CD8-positive, alpha-beta T cell (primary cell): ENCODE measurements at regions of chr1 and their contacts with region 1.

Region 1: DNA sequence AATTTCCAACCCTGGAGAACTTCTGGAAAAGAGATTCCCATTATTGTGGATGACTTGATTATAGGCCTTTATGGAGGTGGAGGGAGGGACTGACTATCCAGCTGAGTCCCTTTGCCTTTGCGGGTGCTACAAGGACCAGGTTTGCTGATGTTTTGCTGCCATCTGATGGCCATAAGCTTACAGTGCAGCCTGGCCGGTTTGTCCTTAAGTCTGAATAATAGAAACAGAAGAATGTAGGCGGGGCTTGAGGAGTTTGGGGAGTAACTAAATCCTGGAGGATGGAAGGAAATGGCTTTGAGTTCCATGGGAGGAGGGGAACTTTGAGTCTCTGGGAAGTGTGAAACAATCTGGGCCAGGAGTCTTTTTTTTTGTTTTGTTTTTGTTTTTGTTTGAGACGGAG is 55.7 kb upstream of the CD1D start:
- DNase-seq: peak; percentile 44 to 83 (median 67)
- ATAC-seq: peak; percentile 94
- H3K4me3 ChIP-seq: no peak overlapping the region
- H3K4me3 Mint-ChIP-seq: no peak overlapping the region
- H3K27ac ChIP-seq: no peak overlapping the region
- H3K27ac Mint-ChIP-seq: no peak overlapping the region
- H3K4me1 ChIP-seq: no peaks in the 10 kb centered on the region
- H3K4me1 Mint-ChIP-seq: no peaks in the 10 kb centered on the region
- H3K27me3 ChIP-seq: no peaks in the 10 kb centered on the region
- H3K27me3 Mint-ChIP-seq: peaks cover 33% of the 10 kb centered on the region
- CTCF ChIP-seq: peak; percentile 79

Region 2: GRCh38 chr1:157193702-157194391 is 931.2 kb before region 1 on chr1:
- CTCF ChIA-PET with region 1: no interaction called
- POLR2A ChIA-PET with region 1: no interaction called
- intact Hi-C with region 1: loop called in 1 of 2 experiments (anchors 2 kb)
- DNase-seq: peak in 8 of 9 experiments; percentile 7 to 58 (median 42)
- ATAC-seq: no peak
- H3K4me3 ChIP-seq: no peak overlapping the region
- H3K4me3 Mint-ChIP-seq: no peak overlapping the region
- H3K27ac ChIP-seq: no peak overlapping the region
- H3K27ac Mint-ChIP-seq: no peak overlapping the region
- H3K4me1 ChIP-seq: no peaks in the 10 kb centered on the region
- H3K4me1 Mint-ChIP-seq: peaks cover 6% of the 10 kb centered on the region
- H3K27me3 ChIP-seq: no peaks in the 10 kb centered on the region
- H3K27me3 Mint-ChIP-seq: peaks cover 40% of the 10 kb centered on the region
- CTCF ChIP-seq: peak; percentile 66

Region 3: GRCh38 chr1:157580179-157580827 is 544.7 kb before region 1 on chr1:
- CTCF ChIA-PET with region 1: interaction called, 54 read pairs
- POLR2A ChIA-PET with region 1: no interaction called
- intact Hi-C with region 1: loop called (anchors 1 kb)
- DNase-seq: peak in 6 of 9 experiments; percentile 5 to 73 (median 22)
- ATAC-seq: no peak
- H3K4me3 ChIP-seq: no peak overlapping the region
- H3K4me3 Mint-ChIP-seq: no peak overlapping the region
- H3K27ac ChIP-seq: no peak overlapping the region
- H3K27ac Mint-ChIP-seq: no peak overlapping the region
- H3K4me1 ChIP-seq: no peaks in the 10 kb centered on the region
- H3K4me1 Mint-ChIP-seq: no peaks in the 10 kb centered on the region
- H3K27me3 ChIP-seq: no peaks in the 10 kb centered on the region
- H3K27me3 Mint-ChIP-seq: peaks cover 3% of the 10 kb centered on the region
- CTCF ChIP-seq: peak; percentile 75

Region 4: GRCh38 chr1:157691285-157691920 is 433.6 kb before region 1 on chr1:
- CTCF ChIA-PET with region 1: no interaction called
- POLR2A ChIA-PET with region 1: no interaction called
- intact Hi-C with region 1: no loop called
- DNase-seq: peak in 2 of 9 experiments; percentile 23 to 30
- ATAC-seq: no peak
- H3K4me3 ChIP-seq: no peak overlapping the region
- H3K4me3 Mint-ChIP-seq: no peak overlapping the region
- H3K27ac ChIP-seq: no peak overlapping the region
- H3K27ac Mint-ChIP-seq: no peak overlapping the region
- H3K4me1 ChIP-seq: no peaks in the 10 kb centered on the region
- H3K4me1 Mint-ChIP-seq: peaks cover 32% of the 10 kb centered on the region
- H3K27me3 ChIP-seq: no peaks in the 10 kb centered on the region
- H3K27me3 Mint-ChIP-seq: peaks cover 2% of the 10 kb centered on the region
- CTCF ChIP-seq: no peak

Region 5: DNA sequence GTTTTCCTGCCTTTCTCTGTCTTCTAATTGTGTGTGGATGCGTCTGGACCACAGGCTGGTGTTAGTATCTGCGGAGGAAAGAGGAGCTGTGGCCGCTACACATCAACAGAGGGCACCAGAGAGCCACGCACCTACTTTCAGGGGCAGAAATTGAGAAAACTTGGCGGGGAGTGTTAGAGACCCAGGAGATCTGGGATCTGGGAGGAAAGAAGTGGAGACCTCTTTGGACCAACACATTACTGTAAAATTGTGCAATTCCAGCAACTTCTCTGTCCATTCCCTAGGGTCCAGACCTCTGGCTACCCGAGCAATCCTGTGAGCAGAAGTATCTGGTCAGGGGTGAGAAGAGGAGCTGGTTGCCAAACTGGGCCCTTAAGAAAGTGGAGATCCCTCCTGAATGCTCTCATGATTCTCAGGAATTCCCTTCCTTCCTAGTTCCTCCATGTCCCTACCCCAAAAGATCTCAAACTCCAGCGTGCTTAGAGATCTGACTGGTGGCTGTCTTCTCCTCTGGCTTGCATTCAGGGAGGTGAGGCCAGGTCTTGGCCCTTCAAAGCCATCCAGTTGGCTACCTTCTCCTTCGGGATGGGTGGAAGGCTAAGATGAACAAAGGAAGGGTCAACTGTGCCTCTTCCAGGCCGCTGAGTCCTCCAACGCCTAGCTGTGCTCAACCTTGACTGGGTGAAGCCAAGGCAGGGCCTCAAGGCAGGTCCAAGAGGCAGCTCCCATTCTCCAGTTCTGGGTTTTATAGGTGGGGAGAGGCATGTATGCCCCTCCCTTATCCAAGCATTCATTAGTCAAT is 132.8 kb before region 1 on chr1:
- CTCF ChIA-PET with region 1: interaction called, 29 read pairs
- POLR2A ChIA-PET with region 1: no interaction called
- intact Hi-C with region 1: loop called (anchors 1 kb)
- DNase-seq: peak in 8 of 9 experiments; percentile 6 to 59 (median 40)
- ATAC-seq: no peak
- H3K4me3 ChIP-seq: no peak overlapping the region
- H3K4me3 Mint-ChIP-seq: no peak overlapping the region
- H3K27ac ChIP-seq: no peak overlapping the region
- H3K27ac Mint-ChIP-seq: no peak overlapping the region
- H3K4me1 ChIP-seq: peaks cover 5% of the 10 kb centered on the region
- H3K4me1 Mint-ChIP-seq: peaks cover 15% of the 10 kb centered on the region
- H3K27me3 ChIP-seq: peaks cover 4 to 13% of the 10 kb centered on the region in 2 experiments
- H3K27me3 Mint-ChIP-seq: peaks cover 39% of the 10 kb centered on the region
- CTCF ChIP-seq: peak; percentile 70